ENCODE measurements at regions of chr4 and their contacts with region 1.

Region 1: DNA sequence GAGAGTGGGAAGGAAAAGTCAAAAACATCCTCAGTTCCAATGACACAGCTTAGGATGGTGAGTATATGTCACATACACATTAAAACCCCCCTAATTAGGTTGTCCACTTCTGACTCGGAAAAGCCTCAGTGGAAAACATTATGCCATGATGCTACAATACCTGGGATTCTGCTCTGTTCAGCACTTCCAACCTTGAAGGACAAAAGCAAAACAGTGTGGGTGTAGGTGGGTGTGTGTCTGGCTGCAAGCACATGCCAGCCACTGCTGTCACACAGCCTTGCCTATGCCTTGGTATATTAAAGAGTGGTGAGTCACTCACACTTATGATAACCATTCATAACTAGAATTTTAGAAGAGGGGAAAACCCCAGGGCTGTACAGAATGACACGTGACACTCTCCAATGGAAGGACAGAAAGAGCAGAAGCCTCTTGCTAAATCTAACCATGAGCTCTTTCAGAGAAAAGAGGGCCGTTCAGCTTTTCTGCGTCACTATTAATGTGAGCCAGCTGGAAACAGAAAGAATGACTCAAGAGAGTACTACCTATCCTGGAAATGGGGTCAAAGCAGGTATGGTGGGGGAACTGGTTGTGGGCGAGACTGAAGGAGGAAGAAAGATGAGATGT is 159.6 kb downstream of the TET2 start:
- DNase-seq: peak in 1 of 2 experiments; percentile 0
- H3K4me3 ChIP-seq: no peak overlapping the region
- H3K27ac ChIP-seq: no peak overlapping the region
- H3K4me1 ChIP-seq: no peaks in the 10 kb centered on the region
- H3K27me3 ChIP-seq: no peaks in the 10 kb centered on the region
- CTCF ChIP-seq: no peak

Region 2: DNA sequence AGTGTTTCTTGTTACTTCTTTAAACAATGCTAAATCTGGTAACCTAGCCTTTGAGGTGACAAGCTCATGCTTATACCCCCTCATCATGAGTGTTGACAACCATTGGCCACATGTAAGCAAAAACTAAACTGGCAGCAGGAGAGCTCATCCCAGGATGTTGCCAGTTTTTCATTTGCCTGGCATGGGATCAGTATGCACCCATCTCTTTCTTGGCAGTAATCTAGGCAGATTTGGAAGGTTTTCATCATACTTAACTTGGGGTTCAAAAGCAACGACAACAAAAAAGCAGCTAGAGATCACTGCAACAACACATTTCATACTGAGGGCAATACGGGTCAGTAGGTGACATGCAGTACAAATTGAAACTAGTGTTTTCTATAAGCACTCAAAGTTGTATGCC is 45.6 kb after region 1 on chr4:
- CTCF ChIA-PET with region 1: no interaction called
- POLR2A ChIA-PET with region 1: interaction called, 11 read pairs
- intact Hi-C with region 1: no loop called
- DNase-seq: no peak
- H3K4me3 ChIP-seq: no peak overlapping the region
- H3K27ac ChIP-seq: no peak overlapping the region
- H3K4me1 ChIP-seq: no peaks in the 10 kb centered on the region
- H3K27me3 ChIP-seq: no peaks in the 10 kb centered on the region
- CTCF ChIP-seq: no peak